ENCODE measurements at regions of chr20 and their contacts with region 1.

Region 1: GRCh38 chr20:10673988-10674711 is at the start of gene JAG1:
- DNase-seq: peak; percentile 95
- H3K4me3 ChIP-seq: peak within 1 kb of the TSS; percentile 85 to 97 (median 87)
- H3K27ac ChIP-seq: peak within 1 kb of the TSS; percentile 93
- H3K4me1 ChIP-seq: peaks cover 27% of the 10 kb centered on the region
- H3K27me3 ChIP-seq: no peaks in the 10 kb centered on the region
- CTCF ChIP-seq: no peak
- total RNA-seq, gene JAG1: 244 to 283 TPM

Region 2: DNA sequence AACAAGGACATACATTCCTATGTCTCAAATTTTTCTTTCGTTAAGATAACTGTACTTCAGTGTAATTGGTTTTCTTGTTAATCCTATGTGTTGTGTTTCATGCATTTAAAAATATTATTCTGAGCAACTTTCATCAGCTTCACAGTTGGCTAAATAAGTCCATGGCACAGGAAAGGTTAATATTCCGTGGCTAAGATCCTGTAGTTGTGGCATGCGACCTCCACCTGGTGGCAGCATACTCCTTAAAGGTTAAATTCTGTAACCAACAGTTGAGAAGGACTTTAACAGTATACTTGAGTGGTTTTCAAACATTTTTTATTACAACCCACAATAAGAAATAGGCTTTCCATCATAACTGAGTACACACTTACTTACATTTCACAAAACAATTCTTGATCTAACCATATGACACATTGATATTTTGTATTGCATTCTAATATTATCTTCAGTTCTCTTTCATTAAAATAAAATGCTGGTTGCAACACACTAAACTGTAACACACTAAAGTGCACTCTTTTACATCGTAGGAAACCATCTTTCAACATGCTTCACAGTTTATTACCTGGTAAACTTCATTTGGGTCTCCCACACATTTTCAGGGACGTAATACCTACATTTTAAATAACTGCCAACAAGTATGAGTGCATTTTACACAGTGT is 120.7 kb before region 1 on chr20:
- CTCF ChIA-PET with region 1: no interaction called
- dilution Hi-C with region 1: no loop called
- in situ Hi-C with region 1: no loop called
- intact Hi-C with region 1: loop called (anchors 1 kb)
- DNase-seq: peak; percentile 69
- H3K4me3 ChIP-seq: no peak overlapping the region
- H3K27ac ChIP-seq: no peak overlapping the region
- H3K4me1 ChIP-seq: peaks cover 55% of the 10 kb centered on the region
- H3K27me3 ChIP-seq: no peaks in the 10 kb centered on the region
- CTCF ChIP-seq: peak; percentile 81 to 95

Region 3: DNA sequence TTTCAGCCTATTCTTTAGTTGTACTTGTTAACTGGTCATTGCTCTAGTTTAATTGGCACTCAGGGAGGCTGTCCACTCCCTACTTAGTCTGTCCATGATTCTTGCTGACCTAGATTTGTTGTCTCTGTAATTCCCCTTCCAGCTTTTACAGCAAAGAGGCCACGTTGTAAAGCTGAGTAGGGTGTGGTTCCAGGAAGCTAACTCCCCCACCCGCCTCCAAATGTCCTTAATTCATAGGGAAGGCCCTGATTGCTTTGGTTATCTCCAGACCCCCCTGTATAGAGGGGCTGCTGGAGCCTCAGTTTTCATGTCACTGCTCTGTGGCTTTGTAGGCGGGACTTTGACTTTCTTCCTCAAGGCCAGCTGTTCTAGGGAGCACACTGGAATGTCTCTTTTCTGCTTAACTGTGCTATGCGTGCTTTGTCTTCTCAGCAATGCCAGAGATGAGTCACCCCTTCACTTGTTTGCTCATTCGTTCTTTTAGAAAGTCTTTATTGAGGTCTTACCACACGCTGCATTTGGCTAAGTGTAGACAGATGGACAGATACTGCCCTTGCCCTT is 174.7 kb after region 1 on chr20:
- CTCF ChIA-PET with region 1: no interaction called
- dilution Hi-C with region 1: no loop called
- in situ Hi-C with region 1: no loop called
- intact Hi-C with region 1: loop called (anchors 5 kb)
- DNase-seq: peak; percentile 86
- H3K4me3 ChIP-seq: no peak overlapping the region
- H3K27ac ChIP-seq: peak overlapping the region; percentile 40
- H3K4me1 ChIP-seq: peaks cover 15% of the 10 kb centered on the region
- H3K27me3 ChIP-seq: no peaks in the 10 kb centered on the region
- CTCF ChIP-seq: no peak

Region 4: DNA sequence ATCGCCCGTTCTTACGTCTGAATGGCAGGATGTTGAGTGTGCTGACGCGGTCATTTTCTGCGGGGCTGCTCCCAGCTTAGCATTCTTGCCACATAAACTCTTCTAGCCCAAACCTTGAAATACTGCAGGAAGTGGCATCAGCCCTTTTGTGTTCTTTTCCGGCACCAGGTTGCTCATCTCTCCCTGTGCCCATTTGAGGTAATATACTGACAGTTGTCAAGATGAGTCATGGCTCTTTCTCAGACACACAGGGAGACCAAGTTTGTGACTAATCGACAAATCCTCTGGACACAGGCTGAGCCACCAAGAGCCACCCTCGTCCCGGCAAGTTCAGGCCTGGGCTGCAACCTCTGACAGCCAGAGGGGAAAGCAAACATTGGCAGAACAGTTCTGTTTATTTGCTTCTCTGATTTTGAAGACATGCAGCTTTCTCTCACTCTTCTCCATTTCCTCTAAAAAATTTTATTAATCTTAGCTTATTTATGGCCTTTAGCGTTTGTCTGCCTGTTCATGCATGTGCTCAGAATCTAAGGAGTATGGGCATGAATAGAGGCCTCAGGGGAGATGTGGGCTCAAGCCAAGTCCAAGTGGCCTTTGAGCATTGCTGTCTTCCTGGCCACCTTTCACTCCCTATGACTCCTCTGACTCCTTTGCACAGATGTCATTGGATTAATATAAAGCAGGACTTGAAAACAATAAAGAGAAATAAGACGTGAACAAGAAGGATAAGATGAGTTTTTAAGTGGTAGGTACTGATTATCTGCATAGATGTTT is 327.8 kb after region 1 on chr20:
- CTCF ChIA-PET with region 1: interaction called, 3 read pairs
- dilution Hi-C with region 1: no loop called
- in situ Hi-C with region 1: no loop called
- intact Hi-C with region 1: loop called (anchors 1 kb)
- DNase-seq: peak; percentile 99
- H3K4me3 ChIP-seq: no peak overlapping the region
- H3K27ac ChIP-seq: peak overlapping the region; percentile 89
- H3K4me1 ChIP-seq: peaks cover 35% of the 10 kb centered on the region
- H3K27me3 ChIP-seq: no peaks in the 10 kb centered on the region
- CTCF ChIP-seq: no peak

Region 5: DNA sequence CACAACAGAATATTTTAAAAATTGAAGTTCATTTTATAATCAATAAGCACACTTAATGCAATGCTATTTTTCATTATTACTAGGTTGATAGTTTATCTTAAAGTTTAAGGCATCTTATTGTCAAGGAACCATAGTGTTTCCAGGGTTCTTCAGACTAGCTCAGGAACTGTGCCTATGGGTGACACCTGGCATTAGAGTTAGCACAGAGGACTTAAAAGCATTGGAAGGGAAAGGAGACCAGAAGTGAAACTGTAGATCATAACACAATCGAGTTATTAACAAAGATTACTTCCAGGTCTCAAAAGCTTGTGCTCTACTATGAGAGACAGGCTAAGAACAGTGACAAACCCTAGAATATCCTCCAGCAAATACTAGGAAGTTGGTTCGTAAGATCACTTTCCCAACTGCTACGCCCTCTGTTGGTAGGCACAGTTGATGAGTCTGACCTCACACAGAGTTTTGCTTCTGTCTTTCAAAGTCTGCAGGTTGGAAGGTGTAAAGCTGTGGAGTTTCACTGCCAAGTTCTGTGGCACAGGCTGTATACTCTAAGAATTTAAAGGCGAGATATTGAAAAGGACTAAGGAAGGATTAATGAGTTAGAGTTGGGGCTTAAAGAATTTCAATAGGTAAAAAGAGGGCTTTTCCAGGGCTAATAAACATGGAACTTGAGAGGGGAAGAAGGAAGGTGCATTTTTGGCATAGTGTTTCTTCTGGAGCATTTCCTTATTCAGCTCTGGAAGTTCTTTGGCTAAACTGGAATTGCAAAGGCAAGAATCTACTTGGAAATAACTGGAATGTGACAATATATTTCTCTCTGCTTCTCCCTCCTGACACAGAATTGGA is 531.0 kb after region 1 on chr20:
- CTCF ChIA-PET with region 1: no interaction called
- dilution Hi-C with region 1: no loop called
- in situ Hi-C with region 1: loop called in 1 of 2 experiments (anchors 25 kb)
- intact Hi-C with region 1: loop called (anchors 1 kb)
- DNase-seq: peak; percentile 69
- H3K4me3 ChIP-seq: no peak overlapping the region
- H3K27ac ChIP-seq: peak overlapping the region; percentile 65
- H3K4me1 ChIP-seq: peaks cover 46% of the 10 kb centered on the region
- H3K27me3 ChIP-seq: no peaks in the 10 kb centered on the region
- CTCF ChIP-seq: peak; percentile 84 to 95

Region 6: DNA sequence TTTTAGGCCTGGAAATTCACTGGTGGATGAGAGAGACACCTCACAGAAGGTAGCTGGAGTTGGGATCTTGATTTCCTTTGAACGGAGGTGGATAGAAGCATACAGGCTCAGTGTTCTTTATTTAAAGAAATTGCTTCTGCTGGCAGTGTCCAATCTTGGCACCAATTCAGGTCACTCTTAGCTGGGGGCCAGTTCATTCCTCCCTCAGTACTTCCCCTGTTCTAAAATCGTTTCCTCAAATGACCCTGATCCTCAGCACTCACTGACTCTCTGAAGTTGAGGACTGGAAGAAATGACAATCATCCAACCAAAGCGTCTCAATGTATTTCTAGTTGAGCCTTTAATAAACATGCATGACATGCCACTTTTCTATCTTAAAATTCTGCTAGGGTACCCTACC is 771.0 kb after region 1 on chr20:
- CTCF ChIA-PET with region 1: no interaction called
- dilution Hi-C with region 1: no loop called
- in situ Hi-C with region 1: no loop called
- intact Hi-C with region 1: no loop called
- DNase-seq: no peak
- H3K4me3 ChIP-seq: no peak overlapping the region
- H3K27ac ChIP-seq: no peak overlapping the region
- H3K4me1 ChIP-seq: peaks cover 4% of the 10 kb centered on the region
- H3K27me3 ChIP-seq: no peaks in the 10 kb centered on the region
- CTCF ChIP-seq: no peak

Region 7: GRCh38 chr20:11454966-11455799 is 781.0 kb after region 1 on chr20:
- CTCF ChIA-PET with region 1: interaction called, 5 read pairs
- dilution Hi-C with region 1: no loop called
- in situ Hi-C with region 1: no loop called
- intact Hi-C with region 1: loop called (anchors 2 kb)
- DNase-seq: peak; percentile 86
- H3K4me3 ChIP-seq: peak overlapping the region; percentile 33 to 48 (median 37)
- H3K27ac ChIP-seq: peak overlapping the region; percentile 93
- H3K4me1 ChIP-seq: peaks cover 71% of the 10 kb centered on the region
- H3K27me3 ChIP-seq: no peaks in the 10 kb centered on the region
- CTCF ChIP-seq: no peak